ENCODE measurements at regions of chr1 and their contacts with region 1.

Region 1: GRCh38 chr1:44594871-44595746 is 79.2 kb downstream of the TMEM53 start:
- DNase-seq: peak; percentile 72
- H3K4me3 Mint-ChIP-seq: no peak overlapping the region
- H3K27ac Mint-ChIP-seq: peak overlapping the region; percentile 63
- H3K4me1 Mint-ChIP-seq: peaks cover 19% of the 10 kb centered on the region
- H3K27me3 Mint-ChIP-seq: no peaks in the 10 kb centered on the region
- CTCF ChIP-seq: peak; percentile 99

Region 2: GRCh38 chr1:44316231-44316759 is 278.8 kb before region 1 on chr1:
- CTCF ChIA-PET with region 1: interaction called, 10 read pairs
- POLR2A ChIA-PET with region 1: interaction called, 4 read pairs
- intact Hi-C with region 1: no loop called
- DNase-seq: no peak
- H3K4me3 Mint-ChIP-seq: no peak overlapping the region
- H3K27ac Mint-ChIP-seq: no peak overlapping the region
- H3K4me1 Mint-ChIP-seq: no peaks in the 10 kb centered on the region
- H3K27me3 Mint-ChIP-seq: no peaks in the 10 kb centered on the region
- CTCF ChIP-seq: no peak

Region 3: DNA sequence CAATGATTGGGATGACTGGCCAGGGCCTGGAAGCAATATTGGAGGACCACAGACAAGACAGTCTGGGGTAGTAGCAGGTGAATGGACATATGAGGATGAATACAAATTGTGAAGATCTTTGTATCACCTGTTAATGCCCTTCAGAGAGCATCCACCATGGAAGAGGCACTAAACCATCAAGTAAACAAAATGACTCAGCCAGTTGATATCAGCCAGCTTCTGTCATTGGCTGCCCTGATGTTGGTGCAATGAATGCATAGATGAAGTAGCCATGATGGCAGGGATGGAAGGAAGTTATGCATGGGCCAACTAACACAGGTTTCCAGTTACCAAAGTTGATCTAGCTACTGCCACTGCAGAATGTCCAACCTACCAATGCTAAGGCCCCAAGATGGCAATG is 223.9 kb before region 1 on chr1:
- CTCF ChIA-PET with region 1: interaction called, 113 read pairs
- POLR2A ChIA-PET with region 1: no interaction called
- intact Hi-C with region 1: no loop called
- DNase-seq: no peak
- H3K4me3 Mint-ChIP-seq: no peak overlapping the region
- H3K27ac Mint-ChIP-seq: no peak overlapping the region
- H3K4me1 Mint-ChIP-seq: no peaks in the 10 kb centered on the region
- H3K27me3 Mint-ChIP-seq: no peaks in the 10 kb centered on the region
- CTCF ChIP-seq: no peak

Region 4: GRCh38 chr1:44405041-44405797 is 189.9 kb before region 1 on chr1 and contains the start of gene RNF220:
- CTCF ChIA-PET with region 1: interaction called, 3 read pairs
- POLR2A ChIA-PET with region 1: no interaction called
- intact Hi-C with region 1: loop called (anchors 1 kb)
- DNase-seq: peak; percentile 49
- H3K4me3 Mint-ChIP-seq: peak within 1 kb of the TSS; percentile 79
- H3K27ac Mint-ChIP-seq: no peak within 1 kb of the TSS
- H3K4me1 Mint-ChIP-seq: no peaks in the 10 kb centered on the region
- H3K27me3 Mint-ChIP-seq: no peaks in the 10 kb centered on the region
- CTCF ChIP-seq: no peak
- total RNA-seq, gene RNF220: 65.4 and 67.1 TPM in 2 replicates

Region 5: DNA sequence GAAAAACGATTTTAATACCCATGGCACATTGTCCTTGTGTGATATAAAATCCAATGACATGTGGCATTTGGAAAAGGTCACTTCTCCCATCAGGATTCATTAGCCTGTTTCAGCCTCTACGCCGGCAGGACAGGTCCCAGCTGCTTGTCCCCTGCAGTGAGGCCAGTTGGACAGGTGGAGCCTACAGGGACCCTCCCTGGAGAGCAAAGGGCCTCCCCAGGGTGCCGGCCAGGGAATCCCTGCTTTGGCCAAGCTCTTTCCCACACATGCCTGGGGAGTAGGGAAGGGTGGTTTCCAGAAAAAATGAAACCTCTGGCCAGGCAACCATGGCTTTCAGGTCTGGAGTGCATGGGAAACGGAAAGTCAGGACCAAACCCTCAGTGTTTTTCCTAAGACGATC is 13.9 kb before region 1 on chr1:
- CTCF ChIA-PET with region 1: interaction called, 18 read pairs
- POLR2A ChIA-PET with region 1: no interaction called
- intact Hi-C with region 1: no loop called
- DNase-seq: no peak
- H3K4me3 Mint-ChIP-seq: no peak overlapping the region
- H3K27ac Mint-ChIP-seq: no peak overlapping the region
- H3K4me1 Mint-ChIP-seq: no peaks in the 10 kb centered on the region
- H3K27me3 Mint-ChIP-seq: no peaks in the 10 kb centered on the region
- CTCF ChIP-seq: no peak

Region 6: GRCh38 chr1:44747878-44748277 is 152.8 kb after region 1 on chr1:
- CTCF ChIA-PET with region 1: no interaction called
- POLR2A ChIA-PET with region 1: no interaction called
- intact Hi-C with region 1: no loop called
- DNase-seq: no peak
- H3K4me3 Mint-ChIP-seq: no peak overlapping the region
- H3K27ac Mint-ChIP-seq: no peak overlapping the region
- H3K4me1 Mint-ChIP-seq: peaks cover 1% of the 10 kb centered on the region
- H3K27me3 Mint-ChIP-seq: no peaks in the 10 kb centered on the region
- CTCF ChIP-seq: no peak